Natural killer cell (primary cell): ENCODE measurements at regions of chr19 and their contacts with region 1.

Region 1: GRCh38 chr19:57888560-57889231 is at the start of gene ZNF814:
- DNase-seq: peak; percentile 82 to 84
- ATAC-seq: peak; percentile 93 to 97 (median 94)
- H3K4me3 ChIP-seq: peak within 1 kb of the TSS; percentile 84
- H3K4me3 Mint-ChIP-seq: peak within 1 kb of the TSS; percentile 95
- H3K27ac ChIP-seq: peak within 1 kb of the TSS; percentile 75
- H3K27ac Mint-ChIP-seq: peak within 1 kb of the TSS; percentile 89 to 91
- H3K4me1 ChIP-seq: peaks cover 21% of the 10 kb centered on the region
- H3K4me1 Mint-ChIP-seq: peaks cover 22 to 28% of the 10 kb centered on the region in 2 donors
- H3K27me3 ChIP-seq: no peaks in the 10 kb centered on the region
- H3K27me3 Mint-ChIP-seq: no peaks in the 10 kb centered on the region
- CTCF ChIP-seq: no peak
- total RNA-seq, gene ZNF814: 25.2 to 51.2 (median 38.3) TPM

Region 2: DNA sequence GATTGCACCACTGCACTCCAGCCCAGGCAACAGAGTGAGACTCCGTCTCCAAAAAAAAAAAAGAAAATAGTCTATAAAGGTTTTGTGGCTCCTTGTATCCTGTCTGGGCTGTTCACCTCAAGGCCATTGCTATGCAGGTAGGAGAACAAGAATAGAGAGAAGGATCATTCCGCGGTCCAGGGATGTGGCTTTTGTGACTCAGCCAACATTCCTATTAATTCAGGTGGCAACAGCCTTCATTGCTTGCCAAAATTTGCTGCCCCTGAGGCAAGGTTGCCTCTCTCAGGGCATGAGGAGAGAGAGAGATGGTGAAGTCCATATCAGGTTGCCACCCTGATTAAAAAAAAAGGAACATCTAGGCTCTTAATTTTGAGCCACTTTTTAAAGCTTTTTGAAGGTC is 198.9 kb before region 1 on chr19:
- intact Hi-C with region 1: no loop called
- DNase-seq: no peak
- ATAC-seq: no peak
- H3K4me3 ChIP-seq: no peak overlapping the region
- H3K4me3 Mint-ChIP-seq: no peak overlapping the region
- H3K27ac ChIP-seq: no peak overlapping the region
- H3K27ac Mint-ChIP-seq: no peak overlapping the region
- H3K4me1 ChIP-seq: no peaks in the 10 kb centered on the region
- H3K4me1 Mint-ChIP-seq: peaks cover 0 to 9% of the 10 kb centered on the region in 2 donors
- H3K27me3 ChIP-seq: no peaks in the 10 kb centered on the region
- H3K27me3 Mint-ChIP-seq: no peaks in the 10 kb centered on the region
- CTCF ChIP-seq: no peak

Region 3: DNA sequence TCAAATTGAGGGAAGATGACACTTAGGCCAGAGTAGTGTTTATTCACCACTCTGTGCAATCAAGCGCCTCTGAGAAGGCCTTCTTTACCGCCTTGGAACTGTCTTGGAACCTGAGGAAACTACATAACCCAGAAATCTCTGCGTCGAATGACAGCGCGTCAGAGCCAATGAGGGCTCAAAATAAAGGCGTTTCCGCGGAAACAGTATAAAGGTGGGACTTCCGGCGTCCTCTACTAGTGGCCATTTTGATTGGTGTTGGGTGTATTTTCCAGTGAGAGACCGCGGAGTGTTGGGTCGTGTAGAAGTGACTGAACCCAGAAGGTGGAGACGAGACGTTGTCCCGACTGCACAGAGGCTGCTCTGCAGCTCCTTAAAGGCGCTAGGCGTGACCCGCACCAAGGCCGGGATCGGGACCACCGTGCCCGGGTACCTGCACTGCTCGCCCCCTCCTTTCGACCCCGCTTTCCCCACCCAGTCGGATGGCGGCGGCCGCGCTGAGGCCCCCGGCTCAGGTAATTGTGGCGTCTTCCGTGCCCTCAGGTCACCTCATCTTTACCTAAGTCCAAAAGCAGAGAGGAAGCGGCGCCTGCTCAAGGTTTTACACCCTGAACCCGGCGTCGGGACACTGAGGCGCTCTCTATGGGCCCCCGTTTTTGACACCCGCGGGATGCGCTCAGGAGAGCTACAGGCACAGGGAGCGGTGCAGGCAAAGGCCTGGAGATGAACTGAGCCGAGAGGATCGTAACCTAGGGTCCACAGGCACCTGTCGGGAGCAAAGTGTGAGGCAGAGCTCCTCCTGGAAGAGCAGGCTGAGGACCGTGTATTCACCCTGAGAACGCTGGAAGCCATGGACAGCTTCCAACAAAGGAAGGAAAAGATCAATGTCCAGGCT is 141.9 kb before region 1 on chr19 and contains the start of gene ZNF776:
- intact Hi-C with region 1: no loop called
- DNase-seq: peak; percentile 73 to 93
- ATAC-seq: peak; percentile 97 to 99 (median 98)
- H3K4me3 ChIP-seq: peak within 1 kb of the TSS; percentile 69
- H3K4me3 Mint-ChIP-seq: peak within 1 kb of the TSS; percentile 93
- H3K27ac ChIP-seq: peak within 1 kb of the TSS; percentile 75
- H3K27ac Mint-ChIP-seq: peak within 1 kb of the TSS; percentile 99
- H3K4me1 ChIP-seq: peaks cover 11% of the 10 kb centered on the region
- H3K4me1 Mint-ChIP-seq: peaks cover 25 to 40% of the 10 kb centered on the region in 2 donors
- H3K27me3 ChIP-seq: no peaks in the 10 kb centered on the region
- H3K27me3 Mint-ChIP-seq: no peaks in the 10 kb centered on the region
- CTCF ChIP-seq: no peak
- total RNA-seq, gene ZNF776: 10.5 to 19.2 (median 18.7) TPM

Region 4: GRCh38 chr19:57850553-57851017 is 38.1 kb before region 1 on chr19:
- intact Hi-C with region 1: loop called (anchors 1 kb)
- DNase-seq: peak in 1 of 2 donors; percentile 10
- ATAC-seq: no peak
- H3K4me3 ChIP-seq: peak overlapping the region; percentile 79
- H3K4me3 Mint-ChIP-seq: peak overlapping the region; percentile 96
- H3K27ac ChIP-seq: peak overlapping the region; percentile 84
- H3K27ac Mint-ChIP-seq: peak overlapping the region; percentile 96 to 98
- H3K4me1 ChIP-seq: peaks cover 18% of the 10 kb centered on the region
- H3K4me1 Mint-ChIP-seq: peaks cover 29 to 30% of the 10 kb centered on the region in 2 donors
- H3K27me3 ChIP-seq: no peaks in the 10 kb centered on the region
- H3K27me3 Mint-ChIP-seq: no peaks in the 10 kb centered on the region
- CTCF ChIP-seq: no peak

Region 5: DNA sequence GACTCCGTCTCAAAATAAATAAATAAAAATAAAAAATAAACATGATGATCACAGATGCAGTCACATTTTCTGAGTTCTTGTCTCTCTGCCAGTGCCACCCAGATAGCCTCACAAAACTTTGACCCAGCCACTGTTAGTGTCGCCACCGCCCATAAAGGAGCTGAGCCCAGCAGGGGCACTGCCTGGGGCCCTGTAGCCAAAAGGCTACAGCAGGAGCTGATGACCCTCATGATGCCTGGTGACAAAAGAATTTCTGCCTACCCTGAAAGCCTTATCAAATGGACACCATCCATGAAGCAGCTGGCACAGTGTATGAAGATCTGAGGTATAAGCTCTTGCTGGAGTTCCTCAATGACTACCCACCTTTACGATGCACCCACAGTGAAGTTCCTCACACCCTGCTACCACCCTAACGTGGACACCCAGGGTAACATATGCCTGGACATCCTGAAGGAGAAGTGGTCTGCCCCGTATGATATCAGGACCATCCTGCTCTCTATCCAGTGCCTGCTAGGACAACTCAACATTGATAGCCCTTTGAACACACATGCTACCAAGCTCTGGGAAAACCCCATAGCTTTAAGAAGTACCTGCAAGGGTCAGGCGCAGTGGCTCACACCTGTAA is 20.7 kb before region 1 on chr19:
- intact Hi-C with region 1: no loop called
- DNase-seq: no peak
- ATAC-seq: no peak
- H3K4me3 ChIP-seq: no peak overlapping the region
- H3K4me3 Mint-ChIP-seq: no peak overlapping the region
- H3K27ac ChIP-seq: no peak overlapping the region
- H3K27ac Mint-ChIP-seq: no peak overlapping the region
- H3K4me1 ChIP-seq: no peaks in the 10 kb centered on the region
- H3K4me1 Mint-ChIP-seq: no peaks in the 10 kb centered on the region
- H3K27me3 ChIP-seq: no peaks in the 10 kb centered on the region
- H3K27me3 Mint-ChIP-seq: no peaks in the 10 kb centered on the region
- CTCF ChIP-seq: no peak

Region 6: GRCh38 chr19:57914531-57914930 is 25.8 kb after region 1 on chr19:
- intact Hi-C with region 1: loop called (anchors 2 kb)
- DNase-seq: no peak
- ATAC-seq: no peak
- H3K4me3 ChIP-seq: no peak overlapping the region
- H3K4me3 Mint-ChIP-seq: peak overlapping the region; percentile 97
- H3K27ac ChIP-seq: no peak overlapping the region
- H3K27ac Mint-ChIP-seq: peak overlapping the region; percentile 99
- H3K4me1 ChIP-seq: peaks cover 16% of the 10 kb centered on the region
- H3K4me1 Mint-ChIP-seq: peaks cover 41 to 47% of the 10 kb centered on the region in 2 donors
- H3K27me3 ChIP-seq: no peaks in the 10 kb centered on the region
- H3K27me3 Mint-ChIP-seq: no peaks in the 10 kb centered on the region
- CTCF ChIP-seq: no peak